MCF 10A (cell line): ENCODE measurements at regions of chr2 and their contacts with region 1.

Region 1: GRCh38 chr2:224284134-224284946 is 117.6 kb downstream of the FAM124B start:
- DNase-seq: peak; percentile 65
- H3K4me3 Mint-ChIP-seq: no peak overlapping the region
- H3K27ac Mint-ChIP-seq: no peak overlapping the region
- H3K4me1 Mint-ChIP-seq: no peaks in the 10 kb centered on the region
- H3K27me3 Mint-ChIP-seq: peaks cover 25% of the 10 kb centered on the region
- CTCF ChIP-seq: peak; percentile 85

Region 2: DNA sequence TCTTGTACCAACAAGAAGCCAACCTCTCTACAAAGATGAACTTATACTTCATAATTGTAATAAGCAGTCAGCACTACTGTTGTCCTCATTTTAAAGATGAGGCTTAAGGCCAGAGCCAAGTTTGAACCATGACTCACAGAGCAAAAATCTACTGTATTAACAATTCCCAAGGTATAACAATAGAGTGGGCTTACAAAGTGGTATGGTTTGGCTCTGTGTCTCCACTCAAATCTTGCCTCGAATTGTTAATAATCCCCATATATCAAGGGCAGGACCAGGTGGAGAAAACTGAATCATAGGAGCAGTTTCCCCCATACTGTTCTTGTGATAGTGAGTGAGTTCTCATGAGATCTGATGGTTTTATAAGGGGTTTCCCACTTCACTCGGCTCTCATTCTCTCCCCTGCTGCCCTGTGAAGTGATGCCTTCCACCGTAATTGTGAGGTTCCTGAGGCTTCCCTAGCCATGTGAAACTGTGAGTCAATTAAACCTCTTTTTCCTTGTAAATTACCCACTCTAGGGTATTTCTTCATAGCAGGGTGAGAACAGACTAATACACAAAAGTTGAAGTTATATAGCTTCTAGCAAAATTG is 307.6 kb before region 1 on chr2:
- CTCF ChIA-PET with region 1: interaction called, 97 read pairs
- POLR2A ChIA-PET with region 1: no interaction called
- intact Hi-C with region 1: no loop called
- DNase-seq: peak; percentile 18
- H3K4me3 Mint-ChIP-seq: no peak overlapping the region
- H3K27ac Mint-ChIP-seq: no peak overlapping the region
- H3K4me1 Mint-ChIP-seq: no peaks in the 10 kb centered on the region
- H3K27me3 Mint-ChIP-seq: no peaks in the 10 kb centered on the region
- CTCF ChIP-seq: no peak

Region 3: DNA sequence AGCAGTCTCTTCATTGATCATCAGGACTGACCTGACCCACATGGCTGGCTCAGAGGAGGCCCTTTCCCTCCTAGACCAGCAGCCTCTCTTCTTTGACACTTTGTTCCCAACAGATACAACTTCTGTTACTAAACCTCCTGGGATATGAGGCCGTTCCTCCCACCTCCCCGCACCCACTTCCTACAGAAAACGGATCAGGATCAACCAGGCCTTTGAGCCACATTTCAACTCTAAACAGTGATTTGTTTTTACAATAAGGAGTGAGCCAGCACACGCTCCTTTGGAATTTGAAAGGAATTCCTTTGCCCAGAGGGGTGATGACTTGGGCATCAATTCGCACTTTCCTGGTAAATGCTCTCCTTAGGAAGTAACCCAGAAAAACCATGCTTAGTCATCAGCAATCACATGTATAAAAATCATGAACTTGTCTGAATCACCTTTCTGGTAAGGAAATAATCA is 62.9 kb before region 1 on chr2:
- CTCF ChIA-PET with region 1: interaction called, 5 read pairs
- POLR2A ChIA-PET with region 1: no interaction called
- intact Hi-C with region 1: loop called (anchors 5 kb)
- DNase-seq: peak; percentile 93
- H3K4me3 Mint-ChIP-seq: no peak overlapping the region
- H3K27ac Mint-ChIP-seq: peak overlapping the region; percentile 99
- H3K4me1 Mint-ChIP-seq: peaks cover 27% of the 10 kb centered on the region
- H3K27me3 Mint-ChIP-seq: no peaks in the 10 kb centered on the region
- CTCF ChIP-seq: no peak

Region 4: DNA sequence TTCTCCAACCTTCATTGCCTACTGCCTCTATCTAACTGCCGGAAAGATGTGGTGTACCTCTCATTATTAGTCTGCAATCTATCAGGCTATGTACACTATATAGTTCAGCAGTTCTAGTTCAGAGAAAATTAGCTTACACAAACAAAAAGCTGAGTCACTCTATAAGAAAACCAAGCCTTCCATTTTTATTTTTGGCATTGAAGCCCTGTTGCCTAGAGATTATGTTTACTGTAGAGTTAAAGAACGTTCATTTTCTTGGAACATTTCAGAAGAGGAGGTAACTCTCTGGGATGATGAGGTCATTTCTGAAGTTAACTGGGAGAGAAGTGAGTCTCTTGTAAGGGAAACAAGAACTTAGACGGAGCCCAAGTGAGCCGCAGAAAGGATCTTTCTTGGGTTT is 15.9 kb before region 1 on chr2:
- CTCF ChIA-PET with region 1: interaction called, 14 read pairs
- POLR2A ChIA-PET with region 1: no interaction called
- intact Hi-C with region 1: no loop called
- DNase-seq: peak; percentile 76
- H3K4me3 Mint-ChIP-seq: no peak overlapping the region
- H3K27ac Mint-ChIP-seq: peak overlapping the region; percentile 76
- H3K4me1 Mint-ChIP-seq: peaks cover 8% of the 10 kb centered on the region
- H3K27me3 Mint-ChIP-seq: no peaks in the 10 kb centered on the region
- CTCF ChIP-seq: no peak

Region 5: DNA sequence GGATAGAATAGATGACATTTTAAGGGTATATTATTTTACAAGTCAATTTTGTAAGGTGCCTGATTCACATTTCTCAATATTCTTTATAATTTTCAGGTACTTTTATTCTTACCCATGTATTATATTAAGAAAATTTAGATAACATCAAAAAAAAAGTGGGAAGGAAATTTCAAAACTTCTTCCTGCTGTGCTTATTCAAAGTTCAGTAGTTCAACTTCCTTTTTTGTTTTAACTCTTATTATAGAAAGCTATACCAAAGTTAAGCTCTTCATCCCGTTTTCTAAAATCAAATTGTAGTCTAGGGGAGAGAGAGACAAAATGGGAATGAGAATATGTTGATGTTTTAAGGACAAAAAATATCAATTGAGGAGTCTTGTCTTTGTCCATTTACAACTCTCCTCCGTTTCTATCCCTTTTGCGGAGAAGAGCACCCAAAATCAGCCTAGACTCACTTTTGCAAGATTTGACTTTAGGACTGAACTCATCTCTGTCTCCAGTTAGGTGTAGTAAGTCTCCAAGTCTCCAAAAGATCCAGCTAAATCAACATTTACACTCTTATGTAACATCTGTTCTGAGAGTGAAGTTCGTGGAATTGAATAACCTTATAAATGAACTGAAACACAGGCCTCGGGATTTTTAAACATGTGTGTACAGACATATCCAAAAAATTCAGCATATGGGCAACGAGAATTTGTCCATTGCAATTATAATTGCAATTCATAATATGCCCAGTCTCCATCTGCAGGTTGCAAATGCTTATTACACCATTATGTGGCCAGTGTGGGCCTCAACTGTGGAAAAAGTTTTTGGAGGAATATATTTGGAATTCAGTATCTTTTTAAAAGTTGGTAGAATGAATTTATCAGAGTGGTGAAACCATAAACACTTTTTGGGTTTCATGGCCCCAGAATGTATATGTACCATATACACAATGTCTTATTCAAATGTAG is 93.7 kb after region 1 on chr2:
- CTCF ChIA-PET with region 1: no interaction called
- POLR2A ChIA-PET with region 1: no interaction called
- intact Hi-C with region 1: no loop called
- DNase-seq: no peak
- H3K4me3 Mint-ChIP-seq: no peak overlapping the region
- H3K27ac Mint-ChIP-seq: no peak overlapping the region
- H3K4me1 Mint-ChIP-seq: no peaks in the 10 kb centered on the region
- H3K27me3 Mint-ChIP-seq: no peaks in the 10 kb centered on the region
- CTCF ChIP-seq: peak; percentile 26

Region 6: GRCh38 chr2:224628416-224628815 is 344.1 kb after region 1 on chr2:
- CTCF ChIA-PET with region 1: no interaction called
- POLR2A ChIA-PET with region 1: no interaction called
- intact Hi-C with region 1: no loop called
- DNase-seq: no peak
- H3K4me3 Mint-ChIP-seq: no peak overlapping the region
- H3K27ac Mint-ChIP-seq: no peak overlapping the region
- H3K4me1 Mint-ChIP-seq: no peaks in the 10 kb centered on the region
- H3K27me3 Mint-ChIP-seq: no peaks in the 10 kb centered on the region
- CTCF ChIP-seq: no peak